ENCODE measurements at regions of chr6 and their contacts with region 1.

Region 1: GRCh38 chr6:24891004-24891403 is 44.8 kb downstream of the RIPOR2 start:
- DNase-seq: peak; percentile 39
- ATAC-seq: peak; percentile 67
- H3K4me3 Mint-ChIP-seq: no peak overlapping the region
- H3K27ac Mint-ChIP-seq: peak overlapping the region; percentile 93
- H3K4me1 Mint-ChIP-seq: peaks cover 87% of the 10 kb centered on the region
- H3K27me3 Mint-ChIP-seq: no peaks in the 10 kb centered on the region

Region 2: GRCh38 chr6:24836109-24836508 is 54.9 kb before region 1 on chr6:
- CTCF ChIA-PET with region 1: no interaction called
- POLR2A ChIA-PET with region 1: no interaction called
- intact Hi-C with region 1: no loop called
- DNase-seq: no peak
- ATAC-seq: no peak
- H3K4me3 Mint-ChIP-seq: no peak overlapping the region
- H3K27ac Mint-ChIP-seq: peak overlapping the region; percentile 38
- H3K4me1 Mint-ChIP-seq: peaks cover 66% of the 10 kb centered on the region
- H3K27me3 Mint-ChIP-seq: no peaks in the 10 kb centered on the region

Region 3: GRCh38 chr6:24902782-24903181 is 11.8 kb after region 1 on chr6:
- CTCF ChIA-PET with region 1: interaction called, 43 read pairs
- POLR2A ChIA-PET with region 1: interaction called, 3 read pairs
- intact Hi-C with region 1: no loop called
- DNase-seq: no peak
- ATAC-seq: no peak
- H3K4me3 Mint-ChIP-seq: no peak overlapping the region
- H3K27ac Mint-ChIP-seq: peak overlapping the region; percentile 78
- H3K4me1 Mint-ChIP-seq: peaks cover 92% of the 10 kb centered on the region
- H3K27me3 Mint-ChIP-seq: no peaks in the 10 kb centered on the region

Region 4: GRCh38 chr6:24910961-24911712 is 20.1 kb after region 1 on chr6:
- CTCF ChIA-PET with region 1: interaction called, 16 read pairs
- POLR2A ChIA-PET with region 1: interaction called, 7 read pairs
- intact Hi-C with region 1: no loop called
- DNase-seq: peak; percentile 80
- ATAC-seq: peak; percentile 8
- H3K4me3 Mint-ChIP-seq: peak overlapping the region; percentile 85
- H3K27ac Mint-ChIP-seq: peak overlapping the region; percentile 90
- H3K4me1 Mint-ChIP-seq: peaks cover 83% of the 10 kb centered on the region
- H3K27me3 Mint-ChIP-seq: no peaks in the 10 kb centered on the region